GM10248 (cell line): ENCODE measurements at regions of chr12 and their contacts with region 1.

Region 1: DNA sequence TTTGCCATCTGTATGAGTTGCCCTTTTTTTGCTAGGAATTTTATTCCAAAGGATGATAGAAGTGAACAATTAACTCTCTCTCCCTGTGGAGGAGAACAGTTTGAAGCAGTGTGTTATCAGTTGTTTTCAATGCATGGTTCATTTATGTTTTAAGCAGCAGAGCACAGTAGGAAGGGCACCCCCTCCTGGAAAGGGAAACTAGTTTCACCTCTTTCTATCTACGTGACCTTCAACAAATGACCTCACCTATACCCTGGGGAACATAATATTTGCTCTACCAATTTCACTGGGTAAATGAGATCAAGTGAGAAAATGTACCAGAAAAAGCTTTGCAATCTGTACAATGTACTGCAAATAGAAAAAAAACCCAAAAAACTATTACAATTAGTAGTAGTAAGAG is 5.4 kb upstream of the DCP1B start:
- DNase-seq: no peak
- CTCF ChIP-seq: no peak

Region 2: GRCh38 chr12:1544996-1545700 is 464.5 kb before region 1 on chr12:
- CTCF ChIA-PET with region 1: no interaction called
- POLR2A ChIA-PET with region 1: no interaction called
- DNase-seq: no peak
- CTCF ChIP-seq: no peak

Region 3: DNA sequence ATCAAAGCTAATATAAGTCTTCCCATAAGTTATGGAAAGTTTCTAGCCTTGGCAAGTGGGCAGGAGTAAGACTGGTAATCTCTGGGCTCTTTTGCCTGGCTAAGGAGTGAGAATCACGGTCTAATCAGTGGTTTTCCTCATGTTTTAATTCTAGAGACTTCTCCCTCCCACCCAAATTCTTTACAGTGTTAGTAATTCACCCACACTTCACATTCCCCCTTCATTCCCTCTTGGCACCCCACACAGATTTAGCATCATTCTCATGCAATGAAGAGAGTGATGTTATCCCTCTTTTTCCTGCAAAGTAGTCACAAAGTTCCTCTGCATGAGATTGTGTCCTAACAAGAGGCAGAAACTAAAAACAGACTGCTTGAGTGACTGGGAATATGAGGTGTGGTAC is 62.5 kb before region 1 on chr12:
- CTCF ChIA-PET with region 1: no interaction called
- POLR2A ChIA-PET with region 1: no interaction called
- DNase-seq: no peak
- CTCF ChIP-seq: no peak

Region 4: GRCh38 chr12:2034633-2035430 is 25.2 kb after region 1 on chr12:
- CTCF ChIA-PET with region 1: interaction called, 10 read pairs
- POLR2A ChIA-PET with region 1: no interaction called
- DNase-seq: peak; percentile 92
- CTCF ChIP-seq: peak; percentile 92